Panc1 (cell line): ENCODE measurements at regions of chr3 and their contacts with region 1.

Region 1: GRCh38 chr3:170496026-170496867 is 77.6 kb downstream of the CLDN11 start:
- DNase-seq: no peak
- ATAC-seq: no peak
- H3K4me3 ChIP-seq: no peak overlapping the region
- H3K27ac ChIP-seq: no peak overlapping the region
- H3K4me1 ChIP-seq: no peaks in the 10 kb centered on the region
- H3K27me3 ChIP-seq: no peaks in the 10 kb centered on the region
- CTCF ChIP-seq: peak; percentile 11; the same call in 1 of the 2 replicates

Region 2: DNA sequence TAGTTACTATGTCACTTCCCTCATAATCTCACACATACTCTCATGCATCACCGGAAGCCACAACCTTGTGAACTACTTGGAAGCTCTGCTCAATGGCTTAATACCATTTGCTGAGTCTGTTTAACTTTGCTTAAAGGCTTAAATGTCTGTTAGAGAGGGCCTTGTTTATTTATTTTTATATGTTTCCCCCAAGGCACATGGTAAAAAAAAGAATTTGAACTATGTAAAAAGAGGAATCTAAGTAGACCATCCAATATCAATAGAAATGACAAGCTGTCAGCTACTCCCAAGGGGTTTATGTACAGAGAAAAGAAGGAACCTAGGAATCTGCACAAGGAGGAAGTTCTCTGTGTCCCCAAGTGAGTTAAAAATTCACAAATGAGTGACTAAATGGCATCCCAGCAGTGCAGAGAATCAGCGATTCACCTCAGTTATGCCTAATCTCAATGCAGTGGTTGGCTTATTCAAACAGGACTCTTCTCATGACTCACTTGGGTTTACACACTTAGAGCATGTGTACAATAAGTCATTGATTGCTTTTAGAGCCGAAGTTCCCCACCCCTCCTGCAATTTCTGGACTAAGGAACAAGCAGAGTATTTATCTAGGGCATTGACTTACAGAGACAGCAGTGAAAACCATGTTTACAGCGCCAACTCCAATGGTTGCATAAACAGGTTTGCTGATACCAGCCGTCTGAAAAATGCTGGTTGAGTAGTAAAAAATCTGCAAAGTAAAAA is 505.9 kb after region 1 on chr3:
- CTCF ChIA-PET with region 1: no interaction called
- POLR2A ChIA-PET with region 1: interaction called, 10 read pairs
- in situ Hi-C with region 1: no loop called
- intact Hi-C with region 1: no loop called
- DNase-seq: peak; percentile 61
- ATAC-seq: peak; percentile 92
- H3K4me3 ChIP-seq: no peak overlapping the region
- H3K27ac ChIP-seq: no peak overlapping the region
- H3K4me1 ChIP-seq: peaks cover 4% of the 10 kb centered on the region; the same call in 1 of the 2 replicates
- H3K27me3 ChIP-seq: no peaks in the 10 kb centered on the region
- CTCF ChIP-seq: no peak